Activated CD4-positive, alpha-beta T cell treated with anti-CD3 and anti-CD28 coated beads, Interleukin-2, amount 10 ng/mL, durations not matched to agents 24 days and 14 days (primary cell): ENCODE measurements at regions of chr2 and their contacts with region 1.

Region 1: DNA sequence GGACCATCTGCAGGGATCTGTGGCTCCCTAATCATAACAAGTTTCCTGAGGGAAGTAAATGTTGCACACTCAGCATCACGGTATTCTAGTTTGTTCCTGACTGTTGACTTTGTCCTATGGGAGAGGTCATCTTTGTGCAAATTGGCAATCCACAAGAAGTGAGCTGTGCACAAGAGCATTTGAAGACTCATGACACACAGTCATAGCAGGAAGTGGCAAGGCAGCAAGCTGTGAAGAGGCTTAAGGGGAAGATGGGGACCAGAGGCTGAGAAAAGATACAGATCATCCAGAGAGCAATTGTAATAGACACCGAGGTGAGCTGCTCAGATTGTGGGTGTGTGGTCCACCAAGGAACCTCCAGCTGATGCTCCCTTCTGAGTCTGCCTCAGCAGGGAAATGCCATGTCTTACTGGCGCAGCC is 2.7 kb downstream of the TNP1 start:
- DNase-seq: peak; percentile 79
- H3K4me3 Mint-ChIP-seq: no peak overlapping the region
- H3K27ac Mint-ChIP-seq: peak overlapping the region; percentile 29
- H3K4me1 Mint-ChIP-seq: peaks cover 44% of the 10 kb centered on the region
- H3K27me3 Mint-ChIP-seq: peaks cover 2% of the 10 kb centered on the region

Region 2: DNA sequence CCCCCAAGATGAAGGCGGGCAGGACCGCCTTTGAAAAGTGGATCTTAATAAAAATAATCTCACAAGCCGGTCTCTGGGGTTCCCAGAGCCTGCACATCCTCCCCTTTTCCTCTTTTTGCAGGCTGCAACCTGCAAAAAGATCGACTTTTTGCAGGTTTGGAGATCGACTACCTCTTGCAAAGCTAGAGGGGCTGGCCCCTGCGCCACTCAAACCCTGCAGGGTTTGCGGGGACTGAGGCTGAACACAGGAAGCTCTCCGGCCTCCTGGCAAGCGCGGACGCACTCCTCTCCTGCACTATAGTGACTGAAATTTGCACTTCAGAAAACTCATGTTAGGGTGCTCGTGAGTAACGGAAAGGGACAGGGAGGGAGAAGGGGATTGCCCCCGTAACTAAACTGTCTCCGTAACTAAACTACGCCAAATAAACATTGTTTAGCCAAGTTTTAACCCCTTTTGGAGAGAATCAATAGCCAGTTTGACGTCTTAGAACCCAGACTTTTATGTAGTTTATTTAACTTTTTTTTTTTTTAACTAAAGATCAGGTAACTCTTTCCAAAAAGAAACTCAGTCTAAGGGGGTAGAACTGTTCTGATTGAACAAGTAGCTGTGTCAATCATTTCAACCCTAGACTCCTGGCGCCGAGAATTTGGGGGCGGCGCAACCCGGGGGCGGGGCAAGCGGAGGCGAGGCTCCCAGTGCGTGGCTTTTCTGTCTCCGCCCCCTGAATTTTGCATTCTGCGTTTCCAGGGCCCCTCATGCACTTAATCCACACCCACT is 164.3 kb before region 1 on chr2:
- intact Hi-C with region 1: loop called (anchors 5 kb)
- DNase-seq: peak; percentile 93
- H3K4me3 Mint-ChIP-seq: peak overlapping the region; percentile 89
- H3K27ac Mint-ChIP-seq: peak overlapping the region; percentile 75
- H3K4me1 Mint-ChIP-seq: peaks cover 21% of the 10 kb centered on the region
- H3K27me3 Mint-ChIP-seq: peaks cover 65% of the 10 kb centered on the region

Region 3: GRCh38 chr2:216777650-216778273 is 79.4 kb before region 1 on chr2:
- intact Hi-C with region 1: no loop called
- DNase-seq: peak; percentile 86
- H3K4me3 Mint-ChIP-seq: no peak overlapping the region
- H3K27ac Mint-ChIP-seq: no peak overlapping the region
- H3K4me1 Mint-ChIP-seq: peaks cover 8% of the 10 kb centered on the region
- H3K27me3 Mint-ChIP-seq: peaks cover 20% of the 10 kb centered on the region

Region 4: DNA sequence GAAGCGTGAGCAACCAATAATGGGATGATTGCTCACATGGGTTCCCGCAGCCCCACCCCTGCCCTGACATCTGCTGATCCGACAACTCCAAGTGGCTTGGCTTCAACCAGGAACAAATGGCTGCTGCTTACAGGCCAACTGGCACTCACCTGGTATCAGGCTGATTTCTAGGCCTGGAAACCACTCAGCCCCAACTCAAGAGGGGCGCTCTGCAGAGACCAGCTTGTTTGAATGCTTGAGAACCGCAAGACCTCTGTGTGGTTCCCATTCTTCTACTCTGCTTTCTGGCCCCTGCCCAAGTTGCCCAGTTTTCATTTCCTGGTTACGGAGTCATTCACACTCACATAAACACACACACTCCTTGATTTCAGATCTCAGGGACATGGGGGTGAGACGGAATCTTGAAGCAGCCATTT is 49.3 kb before region 1 on chr2:
- intact Hi-C with region 1: no loop called
- DNase-seq: no peak
- H3K4me3 Mint-ChIP-seq: no peak overlapping the region
- H3K27ac Mint-ChIP-seq: no peak overlapping the region
- H3K4me1 Mint-ChIP-seq: no peaks in the 10 kb centered on the region
- H3K27me3 Mint-ChIP-seq: no peaks in the 10 kb centered on the region

Region 5: GRCh38 chr2:216880509-216881184 is 23.5 kb after region 1 on chr2:
- intact Hi-C with region 1: loop called (anchors 2 kb)
- DNase-seq: peak; percentile 85
- H3K4me3 Mint-ChIP-seq: peak overlapping the region; percentile 63
- H3K27ac Mint-ChIP-seq: peak overlapping the region; percentile 73
- H3K4me1 Mint-ChIP-seq: peaks cover 36% of the 10 kb centered on the region
- H3K27me3 Mint-ChIP-seq: peaks cover 1% of the 10 kb centered on the region

Region 6: GRCh38 chr2:217090024-217090473 is 232.9 kb after region 1 on chr2:
- intact Hi-C with region 1: loop called (anchors 1 kb)
- DNase-seq: peak; percentile 67
- H3K4me3 Mint-ChIP-seq: peak overlapping the region; percentile 54
- H3K27ac Mint-ChIP-seq: peak overlapping the region; percentile 74
- H3K4me1 Mint-ChIP-seq: peaks cover 43% of the 10 kb centered on the region
- H3K27me3 Mint-ChIP-seq: no peaks in the 10 kb centered on the region

Region 7: GRCh38 chr2:217166241-217166850 is 309.2 kb after region 1 on chr2:
- intact Hi-C with region 1: loop called (anchors 5 kb)
- DNase-seq: no peak
- H3K4me3 Mint-ChIP-seq: no peak overlapping the region
- H3K27ac Mint-ChIP-seq: no peak overlapping the region
- H3K4me1 Mint-ChIP-seq: peaks cover 20% of the 10 kb centered on the region
- H3K27me3 Mint-ChIP-seq: peaks cover 9% of the 10 kb centered on the region